ENCODE measurements at regions of chr4 and their contacts with region 1.

Region 1: DNA sequence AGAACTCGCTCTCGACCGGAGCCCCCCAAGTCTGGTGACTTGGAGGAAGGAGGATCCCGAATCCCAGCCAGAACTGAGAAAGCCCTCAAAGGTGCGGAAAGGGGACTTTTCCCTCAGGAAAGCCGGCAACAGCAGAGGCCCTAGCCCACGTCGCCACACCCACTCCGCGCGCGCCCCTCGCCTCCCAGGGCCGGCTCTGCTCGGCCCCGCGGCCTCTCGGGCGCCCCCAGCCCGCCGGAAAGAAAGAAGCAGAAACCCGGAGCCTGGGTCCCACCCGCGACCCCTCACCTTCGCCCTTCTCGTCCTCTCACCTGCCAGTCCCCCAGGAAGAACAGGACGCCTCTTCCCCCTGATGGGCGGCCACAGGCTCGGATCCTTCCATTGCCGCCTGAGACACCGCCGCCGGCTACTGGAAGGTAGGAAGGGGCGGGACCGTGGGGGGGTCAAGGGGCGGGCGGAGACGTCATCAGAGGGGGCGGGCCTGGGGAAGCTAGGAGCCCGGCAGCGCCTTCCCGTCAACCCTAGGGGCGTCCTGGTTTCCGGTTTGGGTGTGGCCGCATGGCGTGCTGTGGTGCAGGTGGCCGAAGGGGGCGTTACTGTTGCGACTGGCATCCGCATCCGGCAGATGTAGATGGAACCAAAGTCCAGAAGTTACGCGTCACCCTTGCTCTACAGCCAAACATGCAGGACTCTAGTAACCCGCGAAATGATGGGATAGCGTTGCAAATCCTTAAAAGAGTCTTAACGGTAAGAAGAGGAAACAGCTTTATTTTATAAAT is at the start of gene UBA6:
- DNase-seq: peak; percentile 89
- ATAC-seq: peak; percentile 95
- H3K4me3 ChIP-seq: peak within 1 kb of the TSS; percentile 77
- H3K27ac ChIP-seq: peak within 1 kb of the TSS; percentile 95
- H3K4me1 ChIP-seq: no peaks in the 10 kb centered on the region
- H3K27me3 ChIP-seq: no peaks in the 10 kb centered on the region
- CTCF ChIP-seq: peak; percentile 27 to 55 (median 31); a peak in 5 of 6 replicates
- EP300 ChIP-seq: peak; percentile 50 to 73; a peak in 3 of 4 replicates
- POLR2A ChIP-seq: peak; percentile 93
- RAD21 ChIP-seq: peak; percentile 23; the same call in 1 of the 2 replicates
- polyA plus RNA-seq, gene UBA6: 7.9 to 15.3 TPM

Region 2: GRCh38 chr4:67475155-67475554 is 225.8 kb before region 1 on chr4:
- CTCF ChIA-PET with region 1: no interaction called
- POLR2A ChIA-PET with region 1: no interaction called
- RAD21 ChIA-PET with region 1: no interaction called
- SMC1A ChIA-PET with region 1: no interaction called
- in situ Hi-C with region 1: no loop called
- intact Hi-C with region 1: no loop called
- DNase-seq: no peak
- ATAC-seq: no peak
- H3K4me3 ChIP-seq: no peak overlapping the region
- H3K27ac ChIP-seq: no peak overlapping the region
- H3K4me1 ChIP-seq: no peaks in the 10 kb centered on the region
- H3K27me3 ChIP-seq: no peaks in the 10 kb centered on the region
- CTCF ChIP-seq: no peak
- EP300 ChIP-seq: no peak
- POLR2A ChIP-seq: no peak
- RAD21 ChIP-seq: no peak

Region 3: GRCh38 chr4:67714248-67714583 is 13.3 kb after region 1 on chr4:
- CTCF ChIA-PET with region 1: interaction called, 9 read pairs
- POLR2A ChIA-PET with region 1: interaction called, 3 read pairs
- RAD21 ChIA-PET with region 1: no interaction called
- SMC1A ChIA-PET with region 1: interaction called, 11 read pairs
- in situ Hi-C with region 1: no loop called
- intact Hi-C with region 1: no loop called
- DNase-seq: no peak
- ATAC-seq: peak; percentile 77
- H3K4me3 ChIP-seq: no peak overlapping the region
- H3K27ac ChIP-seq: no peak overlapping the region
- H3K4me1 ChIP-seq: no peaks in the 10 kb centered on the region
- H3K27me3 ChIP-seq: no peaks in the 10 kb centered on the region
- CTCF ChIP-seq: no peak
- EP300 ChIP-seq: no peak
- POLR2A ChIP-seq: no peak
- RAD21 ChIP-seq: no peak

Region 4: GRCh38 chr4:67779631-67780030 is 78.7 kb after region 1 on chr4:
- CTCF ChIA-PET with region 1: no interaction called
- POLR2A ChIA-PET with region 1: no interaction called
- RAD21 ChIA-PET with region 1: no interaction called
- SMC1A ChIA-PET with region 1: no interaction called
- in situ Hi-C with region 1: no loop called
- intact Hi-C with region 1: no loop called
- DNase-seq: no peak
- ATAC-seq: no peak
- H3K4me3 ChIP-seq: no peak overlapping the region
- H3K27ac ChIP-seq: no peak overlapping the region
- H3K4me1 ChIP-seq: no peaks in the 10 kb centered on the region
- H3K27me3 ChIP-seq: no peaks in the 10 kb centered on the region
- CTCF ChIP-seq: no peak
- EP300 ChIP-seq: no peak
- POLR2A ChIP-seq: no peak
- RAD21 ChIP-seq: no peak

Region 5: GRCh38 chr4:67874986-67875385 is 174.1 kb after region 1 on chr4:
- CTCF ChIA-PET with region 1: no interaction called
- POLR2A ChIA-PET with region 1: no interaction called
- RAD21 ChIA-PET with region 1: no interaction called
- SMC1A ChIA-PET with region 1: no interaction called
- in situ Hi-C with region 1: no loop called
- intact Hi-C with region 1: no loop called
- DNase-seq: no peak
- ATAC-seq: no peak
- H3K4me3 ChIP-seq: no peak overlapping the region
- H3K27ac ChIP-seq: no peak overlapping the region
- H3K4me1 ChIP-seq: no peaks in the 10 kb centered on the region
- H3K27me3 ChIP-seq: no peaks in the 10 kb centered on the region
- CTCF ChIP-seq: no peak
- EP300 ChIP-seq: no peak
- POLR2A ChIP-seq: no peak
- RAD21 ChIP-seq: no peak

Region 6: GRCh38 chr4:68349649-68350360 is 648.9 kb after region 1 on chr4 and contains the start of gene YTHDC1:
- CTCF ChIA-PET with region 1: no interaction called
- POLR2A ChIA-PET with region 1: no interaction called
- RAD21 ChIA-PET with region 1: no interaction called
- SMC1A ChIA-PET with region 1: no interaction called
- in situ Hi-C with region 1: loop called (anchors 10 kb)
- intact Hi-C with region 1: loop called (anchors 5 kb)
- DNase-seq: peak; percentile 81
- ATAC-seq: peak; percentile 93
- H3K4me3 ChIP-seq: peak within 1 kb of the TSS; percentile 84
- H3K27ac ChIP-seq: peak within 1 kb of the TSS; percentile 97
- H3K4me1 ChIP-seq: no peaks in the 10 kb centered on the region
- H3K27me3 ChIP-seq: no peaks in the 10 kb centered on the region
- CTCF ChIP-seq: no peak
- EP300 ChIP-seq: peak in 1 of 2 experiments; percentile 53; a peak in 2 of 4 replicates
- POLR2A ChIP-seq: peak; percentile 99
- RAD21 ChIP-seq: no peak
- polyA plus RNA-seq, gene YTHDC1: 18.7 to 22.7 TPM

Region 7: DNA sequence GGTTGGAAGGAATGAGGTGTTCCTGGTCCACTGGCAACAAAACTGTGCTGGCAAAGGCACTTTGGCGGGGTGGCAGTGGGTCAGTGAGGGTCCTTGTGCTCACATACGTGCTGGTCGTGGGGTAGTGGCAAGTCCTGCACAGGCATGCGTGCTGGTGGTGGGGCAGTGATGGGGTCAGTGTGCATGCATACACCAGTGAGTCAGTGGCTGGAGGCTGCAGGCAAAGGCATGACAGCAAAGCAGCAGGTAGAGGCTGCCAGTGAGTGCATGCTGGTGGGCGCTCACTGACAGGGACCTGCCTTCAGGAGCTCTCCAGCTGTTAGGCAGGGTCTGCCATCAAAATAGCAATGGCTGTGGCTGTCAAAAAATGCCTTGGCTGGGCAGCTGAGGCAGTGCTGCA is 788.4 kb after region 1 on chr4:
- CTCF ChIA-PET with region 1: no interaction called
- POLR2A ChIA-PET with region 1: no interaction called
- RAD21 ChIA-PET with region 1: no interaction called
- SMC1A ChIA-PET with region 1: no interaction called
- in situ Hi-C with region 1: no loop called
- intact Hi-C with region 1: no loop called
- DNase-seq: no peak
- ATAC-seq: no peak; the same call in 2 of the 3 replicates
- H3K4me3 ChIP-seq: no peak overlapping the region
- H3K27ac ChIP-seq: no peak overlapping the region
- H3K4me1 ChIP-seq: no peaks in the 10 kb centered on the region
- H3K27me3 ChIP-seq: no peaks in the 10 kb centered on the region
- CTCF ChIP-seq: no peak
- EP300 ChIP-seq: no peak
- POLR2A ChIP-seq: no peak
- RAD21 ChIP-seq: no peak

Measured in GM12878 (cell line).